Naive thymus-derived CD8-positive, alpha-beta T cell (primary cell): ENCODE measurements at regions of chr9 and their contacts with region 1.

Region 1: DNA sequence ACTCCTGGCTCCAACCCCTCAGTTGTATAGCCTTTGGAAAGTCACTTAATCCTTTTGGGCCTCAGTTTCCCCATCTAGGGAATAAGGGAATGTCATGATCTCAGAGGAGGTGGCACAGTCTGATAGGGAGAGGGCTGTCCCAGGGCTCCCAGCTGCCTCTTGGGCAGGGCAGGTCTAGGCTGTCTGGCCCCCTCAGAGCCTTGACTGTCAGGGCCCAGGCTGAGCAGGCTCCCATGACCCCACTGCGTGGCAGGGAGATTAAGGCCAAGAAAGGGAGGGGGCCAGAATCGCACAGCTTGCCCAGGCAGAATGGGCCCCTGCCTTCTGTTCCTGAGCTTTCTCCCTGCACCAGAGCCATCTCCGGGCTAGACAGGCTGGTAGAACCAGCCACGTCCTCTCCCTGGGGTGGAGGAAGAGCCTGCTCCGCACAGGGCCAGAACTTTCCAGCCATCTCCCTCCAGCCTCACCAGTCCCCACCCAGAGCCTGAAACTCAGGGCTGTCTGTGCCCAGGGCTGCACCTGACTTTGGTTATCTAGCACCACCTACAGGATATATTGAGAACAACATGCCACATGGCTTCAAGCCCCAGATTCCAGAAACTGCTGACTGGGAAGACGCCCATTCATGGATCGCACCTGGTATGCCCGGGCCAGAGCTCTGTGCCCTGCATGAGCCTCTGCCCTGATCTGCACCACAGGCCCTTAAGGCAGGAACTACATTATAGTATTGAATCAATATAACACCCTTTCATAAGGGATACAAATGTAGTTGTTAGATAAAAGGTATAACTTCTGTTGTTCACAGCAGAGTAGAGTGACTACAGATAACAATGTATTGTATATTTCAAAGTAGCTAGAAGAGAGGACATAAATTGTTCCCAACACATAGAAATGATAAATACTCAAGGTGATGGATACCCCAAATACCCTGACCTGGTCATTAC is 32.0 kb downstream of the NAIF1 start:
- DNase-seq: peak; percentile 36 to 90 (median 69)
- ATAC-seq: peak; percentile 58 to 61
- H3K4me3 Mint-ChIP-seq: peak overlapping the region; percentile 39 to 78 (median 62)
- H3K27ac Mint-ChIP-seq: peak overlapping the region; percentile 73 to 97 (median 92)
- H3K4me1 Mint-ChIP-seq: peaks cover 11 to 43% (median 33%) of the 10 kb centered on the region in 4 donors
- H3K27me3 Mint-ChIP-seq: no peaks in the 10 kb centered on the region

Region 2: GRCh38 chr9:127937388-127938280 is 97.5 kb before region 1 on chr9 and contains the start of gene DPM2:
- POLR2A ChIA-PET with region 1: interaction called, 737 read pairs
- DNase-seq: peak; percentile 80 to 92 (median 86)
- ATAC-seq: peak; percentile 85 to 93
- H3K4me3 Mint-ChIP-seq: peak within 1 kb of the TSS; percentile 84 to 97 (median 93)
- H3K27ac Mint-ChIP-seq: peak within 1 kb of the TSS; percentile 75 to 97 (median 94)
- H3K4me1 Mint-ChIP-seq: peaks cover 28 to 60% (median 55%) of the 10 kb centered on the region in 4 donors
- H3K27me3 Mint-ChIP-seq: peaks cover 0 to 3% (median 0%) of the 10 kb centered on the region in 5 donors
- polyA plus RNA-seq, gene DPM2: 28.5 to 34.7 (median 34.2) TPM

Region 3: DNA sequence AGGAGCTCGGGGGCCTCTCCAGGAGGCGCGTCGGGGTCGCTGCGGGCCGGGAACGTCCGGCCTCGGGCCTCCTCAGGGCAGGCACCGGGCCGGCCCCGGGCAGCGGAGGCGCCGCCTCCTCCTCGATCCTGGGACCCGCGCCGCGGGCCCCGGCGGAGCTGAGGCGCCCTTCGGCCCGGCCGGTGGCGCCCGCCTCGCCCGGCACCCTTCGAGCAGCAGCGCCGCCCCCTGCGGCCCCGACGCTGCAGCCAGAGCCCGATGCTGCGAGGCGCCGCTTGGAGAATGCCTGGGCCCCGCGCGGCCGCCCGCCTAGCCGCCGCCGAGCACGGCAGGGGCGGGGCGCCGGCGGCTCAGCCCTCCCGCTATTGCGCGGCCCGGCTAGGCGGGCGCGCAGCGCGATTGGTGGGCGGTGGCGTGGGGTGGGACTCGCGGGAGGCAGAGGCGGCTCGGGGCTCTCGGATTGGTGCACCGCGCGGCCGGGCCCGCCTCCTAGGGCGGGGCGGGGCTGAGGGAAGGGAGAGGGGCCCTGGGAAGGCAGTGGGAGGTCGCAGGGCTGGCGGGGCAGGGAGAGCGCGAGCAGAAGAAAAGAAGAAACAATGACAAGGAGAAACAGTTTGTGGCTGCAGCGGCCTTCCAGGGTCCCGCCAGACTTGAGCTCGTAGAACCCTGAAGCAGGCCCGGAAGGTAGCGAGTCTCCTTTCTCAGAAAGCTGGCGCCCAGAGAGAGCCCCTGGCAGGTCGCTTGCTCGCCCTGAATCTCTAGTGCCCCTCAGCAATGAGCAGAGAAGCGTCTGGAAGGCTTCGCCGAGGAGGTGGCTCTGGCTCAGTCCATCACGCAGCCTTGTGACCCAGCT is 54.2 kb before region 1 on chr9 and contains the start of gene EEIG1:
- POLR2A ChIA-PET with region 1: interaction called, 1,266 read pairs
- DNase-seq: peak; percentile 95 to 99 (median 98)
- ATAC-seq: peak; percentile 82 to 90
- H3K4me3 Mint-ChIP-seq: peak within 1 kb of the TSS; percentile 89 to 99 (median 95)
- H3K27ac Mint-ChIP-seq: peak within 1 kb of the TSS; percentile 93 to 100 (median 98)
- H3K4me1 Mint-ChIP-seq: peaks cover 26 to 64% (median 50%) of the 10 kb centered on the region in 4 donors
- H3K27me3 Mint-ChIP-seq: no peaks in the 10 kb centered on the region
- polyA plus RNA-seq, gene EEIG1: 134 to 318 (median 149) TPM

Region 4: DNA sequence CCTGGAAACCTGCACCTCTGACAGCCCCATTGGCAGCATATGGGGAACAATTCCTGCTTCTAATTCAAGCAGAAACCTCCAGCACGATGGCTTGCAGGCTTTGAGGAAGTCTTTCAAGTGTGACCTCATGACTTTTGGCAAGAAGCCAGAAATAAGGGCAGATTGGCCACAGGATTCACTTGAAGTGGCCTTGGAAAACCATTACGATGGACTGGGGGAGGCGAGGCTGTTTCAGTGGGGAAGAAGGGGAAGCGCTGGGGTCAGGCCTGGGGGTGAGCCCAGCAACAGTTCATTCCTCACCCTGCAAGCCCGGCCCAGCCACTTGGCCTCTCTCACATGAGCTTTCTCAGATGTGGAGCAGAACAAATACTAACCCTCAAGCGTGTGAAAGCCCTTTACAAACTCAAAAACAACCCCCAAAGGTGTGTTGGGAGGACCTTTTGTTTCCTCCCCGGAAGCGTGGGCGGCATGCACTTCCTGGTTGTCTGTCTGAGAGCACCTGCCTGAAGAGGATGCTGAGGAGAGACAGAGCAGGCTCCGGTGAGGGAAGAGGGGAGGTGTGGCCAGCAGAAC is 27.4 kb before region 1 on chr9:
- POLR2A ChIA-PET with region 1: interaction called, 376 read pairs
- DNase-seq: peak; percentile 83 to 98 (median 94)
- ATAC-seq: peak; percentile 88 to 93
- H3K4me3 Mint-ChIP-seq: peak overlapping the region; percentile 76 to 94 (median 90)
- H3K27ac Mint-ChIP-seq: peak overlapping the region; percentile 95 to 100 (median 99)
- H3K4me1 Mint-ChIP-seq: peaks cover 32 to 88% (median 74%) of the 10 kb centered on the region in 4 donors
- H3K27me3 Mint-ChIP-seq: no peaks in the 10 kb centered on the region

Region 5: DNA sequence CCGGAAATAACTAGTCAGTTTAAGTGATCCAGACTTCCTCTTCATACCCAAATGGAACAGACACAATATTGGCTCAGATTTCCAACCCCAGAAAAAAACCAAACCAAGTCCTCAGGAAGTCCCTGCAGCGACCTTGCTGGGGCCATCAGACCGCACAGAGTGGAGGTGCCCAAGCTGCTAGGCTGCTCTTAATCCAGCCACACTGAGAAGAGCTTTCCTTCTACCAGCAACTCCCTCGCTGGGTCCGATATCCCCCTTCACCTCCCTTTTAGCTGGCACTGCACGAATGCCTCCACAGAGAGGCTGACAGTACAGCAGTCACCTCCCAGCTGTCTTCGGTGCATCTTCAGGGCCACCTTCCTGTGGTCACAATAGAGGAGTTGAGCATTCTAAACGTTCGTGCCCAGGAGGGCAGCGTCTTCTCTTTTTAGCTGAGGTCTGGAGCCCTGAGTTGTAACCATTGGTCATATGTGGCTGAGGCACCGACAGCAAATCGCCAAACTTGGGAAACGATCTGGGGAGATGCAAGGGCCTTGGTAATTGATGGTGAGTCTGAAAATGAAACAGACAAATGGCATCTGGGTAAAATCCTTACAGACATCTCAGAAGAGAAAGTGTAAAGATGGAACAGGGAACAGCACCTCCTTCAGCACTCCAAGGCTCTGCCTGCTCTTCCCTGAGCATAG is 26.3 kb after region 1 on chr9:
- POLR2A ChIA-PET with region 1: interaction called, 10 read pairs
- DNase-seq: peak in 2 of 10 donors; percentile 18 to 19
- ATAC-seq: peak; percentile 41 to 54
- H3K4me3 Mint-ChIP-seq: peak overlapping the region; percentile 43 to 83 (median 75)
- H3K27ac Mint-ChIP-seq: peak overlapping the region; percentile 72 to 93 (median 88)
- H3K4me1 Mint-ChIP-seq: peaks cover 18 to 64% (median 37%) of the 10 kb centered on the region in 4 donors
- H3K27me3 Mint-ChIP-seq: no peaks in the 10 kb centered on the region